GM12878 (cell line): ENCODE measurements at regions of chr9 and their contacts with region 1.

Region 1: GRCh38 chr9:125513668-125514413 is 193.2 kb downstream of the MAPKAP1 start:
- DNase-seq: peak; percentile 59
- ATAC-seq: peak; percentile 99
- H3K4me3 ChIP-seq: peak overlapping the region; percentile 19
- H3K27ac ChIP-seq: peak overlapping the region; percentile 67
- H3K4me1 ChIP-seq: peaks cover 15% of the 10 kb centered on the region
- H3K27me3 ChIP-seq: no peaks in the 10 kb centered on the region
- CTCF ChIP-seq: no peak
- EP300 ChIP-seq: no peak
- POLR2A ChIP-seq: no peak
- RAD21 ChIP-seq: no peak

Region 2: GRCh38 chr9:125495172-125496092 is 18.4 kb before region 1 on chr9:
- CTCF ChIA-PET with region 1: interaction called, 4 read pairs
- POLR2A ChIA-PET with region 1: no interaction called
- RAD21 ChIA-PET with region 1: interaction called, 4 read pairs
- SMC1A ChIA-PET with region 1: interaction called, 12 read pairs
- in situ Hi-C with region 1: no loop called
- intact Hi-C with region 1: no loop called
- DNase-seq: peak; percentile 53
- ATAC-seq: peak; percentile 92
- H3K4me3 ChIP-seq: peak overlapping the region; percentile 34; the same call in 1 of the 2 replicates
- H3K27ac ChIP-seq: peak overlapping the region; percentile 48
- H3K4me1 ChIP-seq: peaks cover 25% of the 10 kb centered on the region
- H3K27me3 ChIP-seq: no peaks in the 10 kb centered on the region
- CTCF ChIP-seq: no peak
- EP300 ChIP-seq: peak in 1 of 2 experiments; percentile 47; a peak in 1 of 4 replicates
- POLR2A ChIP-seq: 0 out of 2 replicates have a peak, but pooled peaks have one; percentile 27
- RAD21 ChIP-seq: no peak

Region 3: GRCh38 chr9:125538092-125538473 is 24.2 kb after region 1 on chr9:
- CTCF ChIA-PET with region 1: no interaction called
- POLR2A ChIA-PET with region 1: no interaction called
- RAD21 ChIA-PET with region 1: interaction called, 3 read pairs
- SMC1A ChIA-PET with region 1: interaction called, 88 read pairs
- in situ Hi-C with region 1: no loop called
- intact Hi-C with region 1: no loop called
- DNase-seq: no peak
- ATAC-seq: no peak
- H3K4me3 ChIP-seq: no peak overlapping the region
- H3K27ac ChIP-seq: no peak overlapping the region
- H3K4me1 ChIP-seq: no peaks in the 10 kb centered on the region
- H3K27me3 ChIP-seq: no peaks in the 10 kb centered on the region
- CTCF ChIP-seq: no peak
- EP300 ChIP-seq: no peak
- POLR2A ChIP-seq: no peak
- RAD21 ChIP-seq: no peak

Region 4: GRCh38 chr9:125601961-125602360 is 88.1 kb after region 1 on chr9:
- CTCF ChIA-PET with region 1: no interaction called
- POLR2A ChIA-PET with region 1: no interaction called
- RAD21 ChIA-PET with region 1: no interaction called
- SMC1A ChIA-PET with region 1: no interaction called
- in situ Hi-C with region 1: no loop called
- intact Hi-C with region 1: no loop called
- DNase-seq: no peak
- ATAC-seq: no peak
- H3K4me3 ChIP-seq: no peak overlapping the region
- H3K27ac ChIP-seq: no peak overlapping the region
- H3K4me1 ChIP-seq: no peaks in the 10 kb centered on the region
- H3K27me3 ChIP-seq: no peaks in the 10 kb centered on the region
- CTCF ChIP-seq: peak in 1 of 3 experiments; percentile 13; a peak in 1 of 6 replicates
- EP300 ChIP-seq: no peak
- POLR2A ChIP-seq: no peak
- RAD21 ChIP-seq: peak; percentile 13; the same call in 1 of the 2 replicates